ENCODE measurements at regions of chr17 and their contacts with region 1.

Region 1: DNA sequence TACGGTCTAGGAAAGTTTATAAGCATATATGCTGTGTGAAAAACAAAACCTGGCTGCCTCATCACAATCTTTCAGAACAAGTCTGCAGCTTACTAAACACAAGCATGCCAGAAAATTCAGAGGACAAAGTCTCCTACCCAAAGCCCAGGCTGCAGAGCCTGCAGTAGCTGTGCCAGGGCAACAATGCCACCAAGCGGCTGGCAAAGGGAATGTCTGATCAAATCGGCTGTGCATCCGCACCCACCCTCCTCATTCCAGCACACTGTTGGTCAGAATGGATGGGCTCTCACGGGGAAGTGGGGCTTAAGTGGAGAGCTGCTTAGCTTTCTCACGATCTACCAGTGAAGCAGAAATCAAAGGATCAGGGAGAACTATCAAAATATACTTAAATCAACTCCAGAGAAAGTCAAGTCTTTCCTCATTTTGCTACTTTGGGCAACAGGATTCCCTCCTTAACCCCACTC is 73.5 kb downstream of the CYTH1 start:
- DNase-seq: peak; percentile 79
- H3K4me3 Mint-ChIP-seq: no peak overlapping the region
- H3K27ac Mint-ChIP-seq: no peak overlapping the region
- H3K4me1 Mint-ChIP-seq: peaks cover 6% of the 10 kb centered on the region
- H3K27me3 Mint-ChIP-seq: no peaks in the 10 kb centered on the region
- CTCF ChIP-seq: peak; percentile 85

Region 2: GRCh38 chr17:78360371-78361224 is 347.9 kb before region 1 on chr17:
- CTCF ChIA-PET with region 1: no interaction called
- POLR2A ChIA-PET with region 1: interaction called, 3 read pairs
- intact Hi-C with region 1: loop called (anchors 2 kb)
- DNase-seq: peak; percentile 89
- H3K4me3 Mint-ChIP-seq: peak overlapping the region; percentile 73
- H3K27ac Mint-ChIP-seq: no peak overlapping the region
- H3K4me1 Mint-ChIP-seq: peaks cover 7% of the 10 kb centered on the region
- H3K27me3 Mint-ChIP-seq: no peaks in the 10 kb centered on the region
- CTCF ChIP-seq: peak; percentile 85

Region 3: GRCh38 chr17:78504156-78504925 is 204.2 kb before region 1 on chr17:
- CTCF ChIA-PET with region 1: interaction called, 10 read pairs
- POLR2A ChIA-PET with region 1: no interaction called
- intact Hi-C with region 1: loop called (anchors 2 kb)
- DNase-seq: no peak
- H3K4me3 Mint-ChIP-seq: no peak overlapping the region
- H3K27ac Mint-ChIP-seq: no peak overlapping the region
- H3K4me1 Mint-ChIP-seq: peaks cover 6% of the 10 kb centered on the region
- H3K27me3 Mint-ChIP-seq: peaks cover 16% of the 10 kb centered on the region
- CTCF ChIP-seq: no peak

Region 4: DNA sequence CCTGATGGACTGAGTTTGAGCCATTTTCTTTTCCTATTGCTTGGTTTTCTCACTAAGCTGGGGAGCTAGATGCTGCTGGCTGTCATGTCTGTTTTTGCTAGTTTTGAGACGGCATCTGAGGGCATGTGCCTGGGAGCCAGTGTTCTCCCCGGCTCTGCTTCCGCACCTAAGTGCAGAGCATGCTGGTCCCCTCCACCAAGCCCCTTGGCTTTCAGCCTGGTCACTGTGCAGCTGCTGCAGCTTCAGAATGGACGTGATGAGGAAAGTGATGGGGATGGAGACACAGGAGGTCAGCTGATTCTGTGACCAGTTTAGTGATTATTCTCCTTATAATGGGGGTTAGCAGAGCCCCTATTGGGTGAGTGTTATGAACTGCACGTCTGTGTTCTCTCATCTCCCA is 159.8 kb before region 1 on chr17:
- CTCF ChIA-PET with region 1: no interaction called
- POLR2A ChIA-PET with region 1: no interaction called
- intact Hi-C with region 1: no loop called
- DNase-seq: no peak
- H3K4me3 Mint-ChIP-seq: no peak overlapping the region
- H3K27ac Mint-ChIP-seq: no peak overlapping the region
- H3K4me1 Mint-ChIP-seq: no peaks in the 10 kb centered on the region
- H3K27me3 Mint-ChIP-seq: no peaks in the 10 kb centered on the region
- CTCF ChIP-seq: no peak

Region 5: DNA sequence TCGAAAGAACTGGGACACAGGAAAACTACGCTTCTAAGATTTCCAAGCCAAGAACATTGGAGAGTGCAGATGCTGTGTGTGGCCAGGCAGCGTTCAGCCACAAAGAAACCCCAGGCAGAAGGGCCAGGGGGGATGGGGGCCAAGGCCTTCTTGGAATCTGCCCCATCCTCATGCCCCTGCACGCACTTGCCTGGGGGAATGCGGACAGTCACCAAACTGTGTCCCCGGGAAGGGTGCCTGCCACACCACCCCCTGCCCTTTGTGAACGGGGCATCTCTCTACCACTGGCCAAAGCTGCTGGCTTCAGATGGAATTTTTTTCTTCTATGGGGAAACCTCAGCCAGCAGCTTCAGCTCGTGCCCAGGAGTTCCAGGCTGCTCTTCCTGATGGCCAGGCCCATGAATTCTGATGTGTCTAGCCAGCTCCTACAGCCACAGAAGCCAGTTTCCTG is 99.3 kb before region 1 on chr17:
- CTCF ChIA-PET with region 1: interaction called, 5 read pairs
- POLR2A ChIA-PET with region 1: no interaction called
- intact Hi-C with region 1: loop called (anchors 5 kb)
- DNase-seq: no peak
- H3K4me3 Mint-ChIP-seq: no peak overlapping the region
- H3K27ac Mint-ChIP-seq: no peak overlapping the region
- H3K4me1 Mint-ChIP-seq: no peaks in the 10 kb centered on the region
- H3K27me3 Mint-ChIP-seq: no peaks in the 10 kb centered on the region
- CTCF ChIP-seq: no peak

Region 6: DNA sequence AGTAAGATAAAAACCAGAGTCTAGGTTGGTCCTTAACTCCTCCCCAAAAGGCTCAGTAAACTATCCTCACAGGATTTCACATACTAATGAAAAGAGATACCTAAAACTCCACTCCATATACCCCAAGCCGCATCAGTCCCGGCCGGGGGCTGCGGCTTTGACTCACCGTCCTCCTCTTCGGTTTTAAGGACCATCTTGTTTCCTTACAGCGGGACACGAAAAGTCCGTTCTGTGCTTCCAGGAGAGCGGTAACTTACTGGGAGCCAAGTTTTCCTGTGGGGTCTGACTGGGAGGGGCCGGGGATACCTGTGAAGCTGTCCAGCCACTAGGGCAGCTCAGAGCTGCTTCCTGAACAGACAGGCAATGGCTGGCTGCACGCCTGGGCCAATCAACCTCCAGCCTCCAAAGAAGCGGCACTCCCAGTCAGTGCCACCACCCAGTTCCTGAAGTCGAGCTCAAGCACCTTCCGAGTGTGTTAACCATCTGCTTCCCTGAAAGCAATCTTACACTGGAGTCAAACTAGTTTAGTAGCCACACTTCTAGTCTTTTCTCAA is 28.1 kb after region 1 on chr17:
- CTCF ChIA-PET with region 1: interaction called, 14 read pairs
- POLR2A ChIA-PET with region 1: interaction called, 131 read pairs
- intact Hi-C with region 1: no loop called
- DNase-seq: peak; percentile 88
- H3K4me3 Mint-ChIP-seq: peak overlapping the region; percentile 84
- H3K27ac Mint-ChIP-seq: peak overlapping the region; percentile 87
- H3K4me1 Mint-ChIP-seq: peaks cover 36% of the 10 kb centered on the region
- H3K27me3 Mint-ChIP-seq: no peaks in the 10 kb centered on the region
- CTCF ChIP-seq: peak; percentile 14

Measured in MCF 10A (cell line).